Heart left ventricle (tissue), 16 donors: ENCODE measurements at regions of chr1 and their contacts with region 1.

Region 1: DNA sequence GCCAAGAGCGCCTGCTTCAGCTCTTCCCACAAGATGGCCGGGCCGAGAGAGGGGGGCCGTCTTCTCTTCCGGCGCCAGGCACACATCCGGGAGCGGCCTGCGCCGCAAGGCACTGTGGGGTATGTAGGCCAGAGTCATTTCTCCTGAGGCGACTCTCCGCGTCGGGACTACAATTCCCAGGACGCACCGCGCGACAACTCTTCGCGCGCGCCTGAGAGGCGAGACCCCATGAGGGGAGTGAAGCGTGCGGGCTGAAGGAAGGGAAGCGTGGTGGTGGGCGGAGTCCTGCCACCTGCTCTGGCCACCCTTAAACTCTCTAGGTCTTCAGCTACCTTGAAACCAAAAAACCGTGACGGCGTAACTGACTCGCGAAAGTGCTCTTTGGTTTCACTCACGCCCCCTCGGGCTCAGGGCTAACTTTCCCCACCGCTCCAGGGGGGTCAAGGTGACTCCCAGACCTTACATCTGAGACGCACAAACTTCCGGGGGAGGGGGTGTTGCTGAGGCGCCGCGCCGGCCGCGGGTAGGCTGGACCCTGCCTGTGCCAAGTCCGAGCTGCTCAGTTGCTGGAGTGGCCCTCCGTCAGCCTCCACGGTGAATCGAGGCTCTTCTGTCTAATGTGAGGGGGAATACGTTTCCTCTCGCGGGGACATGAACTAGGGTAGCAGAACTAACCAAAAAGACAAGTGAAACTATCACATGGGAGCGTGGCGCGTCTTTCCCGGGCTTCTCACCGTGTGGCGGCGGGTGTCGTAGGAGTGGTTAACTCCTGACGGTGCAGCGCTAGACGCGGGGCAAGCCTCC is at the start of gene SERBP1:
- DNase-seq: peak; percentile 96 to 98 (median 98)
- ATAC-seq: peak; percentile 97 to 99 (median 98)
- H3K4me3 ChIP-seq: peak within 1 kb of the TSS; percentile 59 to 95 (median 84)
- H3K27ac ChIP-seq: peak within 1 kb of the TSS; percentile 76 to 97 (median 92)
- H3K4me1 ChIP-seq: peaks cover 0 to 63% (median 36%) of the 10 kb centered on the region in 12 donors
- H3K27me3 ChIP-seq: no peaks in the 10 kb centered on the region
- CTCF ChIP-seq: no peak
- POLR2A ChIP-seq: peak in 1 of 2 donors; percentile 72
- total RNA-seq, gene SERBP1: 125 to 163 (median 148) TPM

Region 2: DNA sequence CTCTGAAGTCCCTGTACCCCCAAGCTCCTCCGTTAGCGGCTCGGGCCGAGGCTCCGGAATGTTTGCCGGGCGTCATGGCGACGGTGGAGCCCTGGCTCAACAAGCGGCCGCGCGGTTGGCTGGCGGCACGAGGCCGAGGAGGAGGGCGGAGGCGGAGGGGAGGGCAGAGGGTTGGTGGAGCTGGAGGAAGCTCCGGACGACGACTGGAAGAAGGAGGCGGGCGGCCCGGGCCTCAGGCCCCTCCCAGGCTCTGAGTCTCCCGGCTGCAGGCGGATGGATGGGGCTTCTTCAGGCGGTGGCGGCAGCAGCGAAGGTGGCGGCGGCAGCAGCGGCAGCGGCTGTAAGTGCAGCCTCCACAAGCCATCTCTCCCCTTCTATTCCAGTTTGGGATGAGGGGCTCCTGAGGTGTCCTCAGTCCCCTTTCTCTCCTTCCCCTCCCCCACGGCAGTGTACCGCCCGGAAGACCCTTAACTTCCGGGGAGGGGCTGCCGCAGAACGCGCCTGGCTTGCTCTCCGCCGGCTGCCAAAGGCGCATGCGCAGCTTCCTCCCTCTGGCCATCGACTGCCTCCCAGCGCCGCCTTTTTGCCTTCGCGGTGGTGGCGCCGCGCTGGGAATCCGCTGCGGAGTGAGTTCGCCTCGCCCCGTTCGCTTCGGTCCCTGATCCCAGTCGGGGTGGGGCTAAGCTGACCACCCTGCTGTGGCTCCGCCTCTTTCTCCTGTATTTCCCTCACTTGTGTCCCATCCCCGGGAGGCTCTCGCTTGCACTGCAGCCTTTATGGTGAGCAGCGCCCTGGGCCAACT is 505.6 kb before region 1 on chr1 and contains the starts of genes DNAI4 and MIER1:
- intact Hi-C with region 1: loop called in 1 of 10 experiments (anchors 10 kb)
- DNase-seq: peak; percentile 98 to 99 (median 99)
- ATAC-seq: peak; percentile 96 to 98 (median 98)
- H3K4me3 ChIP-seq: peak within 1 kb of the TSS; percentile 61 to 93 (median 76)
- H3K27ac ChIP-seq: peak within 1 kb of the TSS; percentile 82 to 96 (median 92)
- H3K4me1 ChIP-seq: peaks cover 3 to 40% (median 27%) of the 10 kb centered on the region in 12 donors
- H3K27me3 ChIP-seq: no peaks in the 10 kb centered on the region
- CTCF ChIP-seq: peak in 7 of 12 donors; percentile 9 to 50 (median 27)
- POLR2A ChIP-seq: peak in 1 of 2 donors; percentile 61
- total RNA-seq, gene DNAI4: 4.5 to 18.9 (median 10.5) TPM
- total RNA-seq, gene MIER1: 14.3 to 23.8 (median 19.3) TPM

Region 3: GRCh38 chr1:67407498-67407897 is 23.1 kb before region 1 on chr1:
- intact Hi-C with region 1: loop called in 1 of 10 experiments (anchors 2 kb)
- DNase-seq: no peak
- ATAC-seq: peak in 1 of 4 donors; percentile 69
- H3K4me3 ChIP-seq: no peak overlapping the region
- H3K27ac ChIP-seq: peak overlapping the region in 1 of 12 donors; percentile 46
- H3K4me1 ChIP-seq: peaks cover 0 to 16% (median 9%) of the 10 kb centered on the region in 12 donors
- H3K27me3 ChIP-seq: no peaks in the 10 kb centered on the region
- CTCF ChIP-seq: no peak
- POLR2A ChIP-seq: no peak

Region 4: GRCh38 chr1:67460676-67461500 is 30.3 kb after region 1 on chr1:
- intact Hi-C with region 1: loop called in 3 of 10 experiments (anchors 2 to 5 kb)
- DNase-seq: peak; percentile 60 to 82 (median 68)
- ATAC-seq: peak; percentile 90 to 96 (median 94)
- H3K4me3 ChIP-seq: peak overlapping the region in 2 of 12 donors; percentile 9 to 33
- H3K27ac ChIP-seq: peak overlapping the region in 11 of 12 donors; percentile 43 to 81 (median 66)
- H3K4me1 ChIP-seq: peaks cover 0 to 33% (median 12%) of the 10 kb centered on the region in 12 donors
- H3K27me3 ChIP-seq: no peaks in the 10 kb centered on the region
- CTCF ChIP-seq: no peak
- POLR2A ChIP-seq: no peak

Region 5: GRCh38 chr1:67489643-67490042 is 59.1 kb after region 1 on chr1:
- intact Hi-C with region 1: loop called in 2 of 10 experiments (anchors 5 to 10 kb)
- DNase-seq: no peak
- ATAC-seq: peak in 3 of 4 donors; percentile 81 to 87 (median 84)
- H3K4me3 ChIP-seq: no peak overlapping the region
- H3K27ac ChIP-seq: no peak overlapping the region
- H3K4me1 ChIP-seq: peaks cover 0 to 3% (median 0%) of the 10 kb centered on the region in 12 donors
- H3K27me3 ChIP-seq: no peaks in the 10 kb centered on the region
- CTCF ChIP-seq: peak in 10 of 12 donors; percentile 32 to 60 (median 47)
- POLR2A ChIP-seq: no peak